ENCODE measurements at regions of chr12 and their contacts with region 1.

Region 1: GRCh38 chr12:49232940-49233841 is 31.7 kb upstream of the TUBA1C start:
- DNase-seq: peak; percentile 94
- H3K4me3 ChIP-seq: peak overlapping the region in 1 of 2 donors; percentile 64
- H3K27ac ChIP-seq: peak overlapping the region; percentile 92 to 97
- H3K4me1 ChIP-seq: peaks cover 54% of the 10 kb centered on the region
- H3K27me3 ChIP-seq: no peaks in the 10 kb centered on the region
- CTCF ChIP-seq: peak in 1 of 3 experiments; percentile 24
- POLR2A ChIP-seq: no peak

Region 2: GRCh38 chr12:49130151-49131050 is 102.8 kb before region 1 on chr12:
- intact Hi-C with region 1: loop called (anchors 5 kb)
- DNase-seq: peak; percentile 95
- H3K4me3 ChIP-seq: peak overlapping the region; percentile 100
- H3K27ac ChIP-seq: peak overlapping the region; percentile 100
- H3K4me1 ChIP-seq: peaks cover 23% of the 10 kb centered on the region
- H3K27me3 ChIP-seq: no peaks in the 10 kb centered on the region
- CTCF ChIP-seq: peak; percentile 76 to 91 (median 90)
- POLR2A ChIP-seq: peak; percentile 12

Region 3: GRCh38 chr12:49146406-49146805 is 86.8 kb before region 1 on chr12:
- intact Hi-C with region 1: no loop called
- DNase-seq: no peak
- H3K4me3 ChIP-seq: no peak overlapping the region
- H3K27ac ChIP-seq: no peak overlapping the region
- H3K4me1 ChIP-seq: no peaks in the 10 kb centered on the region
- H3K27me3 ChIP-seq: no peaks in the 10 kb centered on the region
- CTCF ChIP-seq: no peak
- POLR2A ChIP-seq: no peak

Region 4: GRCh38 chr12:49188914-49189367 is 44.2 kb before region 1 on chr12 and contains the start of gene TUBA1A:
- intact Hi-C with region 1: loop called (anchors 5 kb)
- DNase-seq: peak; percentile 98
- H3K4me3 ChIP-seq: peak within 1 kb of the TSS; percentile 89 to 94
- H3K27ac ChIP-seq: peak within 1 kb of the TSS; percentile 96 to 99
- H3K4me1 ChIP-seq: peaks cover 5% of the 10 kb centered on the region
- H3K27me3 ChIP-seq: no peaks in the 10 kb centered on the region
- CTCF ChIP-seq: no peak
- POLR2A ChIP-seq: peak; percentile 84
- total RNA-seq, gene TUBA1A: 156 to 269 TPM